CD4-positive, alpha-beta memory T cell (primary cell): ENCODE measurements at regions of chr13 and their contacts with region 1.

Region 1: DNA sequence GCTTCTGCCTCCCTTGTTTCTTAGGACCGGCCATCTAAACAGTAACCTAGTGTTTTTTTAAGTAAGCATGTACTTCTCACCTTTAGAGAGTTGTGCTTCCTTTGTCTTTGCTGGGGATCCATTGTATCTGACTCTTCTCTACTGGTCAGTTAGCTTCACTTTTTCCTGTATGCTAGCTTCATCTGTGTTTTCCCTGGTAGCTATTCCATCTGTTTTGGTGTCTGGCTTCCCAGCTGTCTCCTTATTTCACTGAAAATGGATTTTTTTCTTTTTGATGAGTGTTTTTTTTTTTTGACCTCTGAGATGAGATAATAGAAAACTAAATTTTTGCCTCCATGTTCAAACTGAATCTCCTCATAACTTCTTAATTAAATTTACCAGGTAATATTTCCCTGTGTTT is 637.0 kb upstream of the SLC10A2 start:
- DNase-seq: no peak
- H3K4me3 ChIP-seq: no peak overlapping the region
- H3K4me3 Mint-ChIP-seq: no peak overlapping the region
- H3K27ac ChIP-seq: no peak overlapping the region
- H3K27ac Mint-ChIP-seq: no peak overlapping the region
- H3K4me1 ChIP-seq: no peaks in the 10 kb centered on the region
- H3K4me1 Mint-ChIP-seq: no peaks in the 10 kb centered on the region
- H3K27me3 ChIP-seq: no peaks in the 10 kb centered on the region
- H3K27me3 Mint-ChIP-seq: no peaks in the 10 kb centered on the region

Region 2: DNA sequence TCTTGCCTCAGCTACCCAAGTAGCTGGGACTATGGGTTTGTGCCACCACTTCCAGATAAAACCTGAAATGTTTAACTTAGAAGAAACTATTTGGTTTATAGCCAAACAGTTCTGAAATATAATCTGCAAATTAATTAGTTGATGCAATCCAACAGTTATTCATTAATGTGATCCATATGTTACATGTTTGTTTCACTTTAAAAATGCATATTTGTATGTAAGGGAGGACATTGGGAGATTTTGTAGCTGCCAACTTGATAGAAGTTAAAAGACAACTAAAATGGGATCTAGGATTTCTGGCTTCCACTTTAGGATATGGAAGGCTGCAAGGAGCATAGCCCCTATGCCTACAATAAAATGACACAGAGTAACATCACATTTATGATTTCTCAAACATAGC is 104.6 kb before region 1 on chr13:
- CTCF ChIA-PET with region 1: no interaction called
- POLR2A ChIA-PET with region 1: no interaction called
- intact Hi-C with region 1: loop called (anchors 10 kb)
- DNase-seq: no peak
- H3K4me3 ChIP-seq: no peak overlapping the region
- H3K4me3 Mint-ChIP-seq: no peak overlapping the region
- H3K27ac ChIP-seq: no peak overlapping the region
- H3K27ac Mint-ChIP-seq: no peak overlapping the region
- H3K4me1 ChIP-seq: no peaks in the 10 kb centered on the region
- H3K4me1 Mint-ChIP-seq: no peaks in the 10 kb centered on the region
- H3K27me3 ChIP-seq: no peaks in the 10 kb centered on the region
- H3K27me3 Mint-ChIP-seq: no peaks in the 10 kb centered on the region

Region 3: DNA sequence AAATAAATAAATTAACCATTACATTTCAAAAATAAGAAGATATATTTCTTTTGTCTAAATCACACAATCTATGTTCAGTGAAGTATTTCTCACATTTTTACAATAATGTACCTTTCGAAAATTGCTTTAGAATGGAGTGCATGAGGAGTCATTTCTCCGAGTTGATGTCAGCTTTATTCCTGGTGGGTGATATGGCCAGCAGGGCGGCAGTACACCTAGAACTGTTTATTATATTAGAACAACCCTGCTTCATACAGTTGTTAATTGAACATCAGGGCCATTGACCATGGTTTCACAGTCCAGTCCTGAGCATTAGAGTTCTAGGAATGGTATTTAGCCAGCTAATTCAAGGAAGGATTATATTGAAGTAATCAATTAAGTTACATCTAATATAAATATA is 59.3 kb after region 1 on chr13:
- CTCF ChIA-PET with region 1: no interaction called
- POLR2A ChIA-PET with region 1: no interaction called
- intact Hi-C with region 1: no loop called
- DNase-seq: no peak
- H3K4me3 ChIP-seq: no peak overlapping the region
- H3K4me3 Mint-ChIP-seq: no peak overlapping the region
- H3K27ac ChIP-seq: no peak overlapping the region
- H3K27ac Mint-ChIP-seq: no peak overlapping the region
- H3K4me1 ChIP-seq: no peaks in the 10 kb centered on the region
- H3K4me1 Mint-ChIP-seq: no peaks in the 10 kb centered on the region
- H3K27me3 ChIP-seq: no peaks in the 10 kb centered on the region
- H3K27me3 Mint-ChIP-seq: no peaks in the 10 kb centered on the region